Right cardiac atrium (tissue), 5 donors: ENCODE measurements at regions of chr5 and their contacts with region 1.

Region 1: GRCh38 chr5:78527054-78527859 is 121.3 kb downstream of the LHFPL2 start:
- DNase-seq: peak; percentile 77 to 85 (median 80)
- ATAC-seq: peak; percentile 94 to 95
- H3K4me3 ChIP-seq: no peak overlapping the region
- H3K27ac ChIP-seq: peak overlapping the region; percentile 82
- H3K4me1 ChIP-seq: peaks cover 18% of the 10 kb centered on the region
- H3K27me3 ChIP-seq: no peaks in the 10 kb centered on the region

Region 2: GRCh38 chr5:78467752-78468357 is 59.4 kb before region 1 on chr5:
- intact Hi-C with region 1: loop called in 2 of 4 experiments (anchors 10 kb)
- DNase-seq: no peak
- ATAC-seq: peak; percentile 40 to 67
- H3K4me3 ChIP-seq: no peak overlapping the region
- H3K27ac ChIP-seq: no peak overlapping the region
- H3K4me1 ChIP-seq: no peaks in the 10 kb centered on the region
- H3K27me3 ChIP-seq: no peaks in the 10 kb centered on the region